Cardiac septum (tissue), 1 donor: ENCODE measurements at regions of chr1 and their contacts with region 1.

Region 1: GRCh38 chr1:64898107-64898845 is 68.1 kb downstream of the JAK1 start:
- DNase-seq: peak; percentile 90

Region 2: GRCh38 chr1:64864018-64864940 is 34.0 kb before region 1 on chr1:
- intact Hi-C with region 1: no loop called
- DNase-seq: peak; percentile 87

Region 3: GRCh38 chr1:64917328-64917861 is 19.1 kb after region 1 on chr1:
- intact Hi-C with region 1: loop called (anchors 2 kb)
- DNase-seq: no peak

Region 4: GRCh38 chr1:64933296-64934070 is 35.2 kb after region 1 on chr1:
- intact Hi-C with region 1: loop called (anchors 5 kb)
- DNase-seq: no peak

Region 5: GRCh38 chr1:64956733-64957441 is 58.6 kb after region 1 on chr1:
- intact Hi-C with region 1: no loop called
- DNase-seq: no peak

Region 6: GRCh38 chr1:65009724-65010420 is 111.6 kb after region 1 on chr1:
- intact Hi-C with region 1: no loop called
- DNase-seq: no peak

Region 7: GRCh38 chr1:65292861-65293593 is 394.8 kb after region 1 on chr1:
- intact Hi-C with region 1: no loop called
- DNase-seq: no peak